Activated CD4-positive, alpha-beta T cell treated with anti-CD3 and anti-CD28 coated beads, Interleukin-2, amount 10 ng/mL, durations not matched to agents 24 days and 14 days (primary cell): ENCODE measurements at regions of chr15 and their contacts with region 1.

Region 1: DNA sequence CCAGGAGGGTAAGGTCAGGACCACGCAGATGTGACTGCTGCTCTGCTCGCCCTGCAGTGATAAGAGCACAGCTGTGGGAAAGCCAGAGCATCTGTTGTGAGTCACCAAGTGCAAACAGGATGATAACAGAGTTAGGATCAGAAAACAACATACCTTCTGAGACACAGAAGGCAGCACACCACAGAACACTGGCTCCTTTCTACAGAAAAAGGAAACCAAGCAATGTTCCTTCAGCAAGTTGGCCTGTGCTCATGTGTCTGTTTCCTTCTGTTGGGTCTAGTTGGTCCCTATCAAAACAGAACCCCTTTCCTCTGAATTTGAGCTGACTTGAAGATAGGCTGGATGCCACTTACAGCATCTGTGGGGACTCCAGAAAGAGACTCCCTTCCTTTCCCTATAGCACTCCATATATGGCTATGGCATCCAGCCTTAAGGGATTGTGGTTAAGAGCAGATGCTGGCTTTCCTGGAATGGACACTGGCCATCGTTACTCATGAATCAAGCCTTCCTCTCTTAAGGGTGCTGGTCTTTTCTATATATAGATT is 440.7 kb upstream of the THBS1 start:
- DNase-seq: peak; percentile 75
- H3K4me3 Mint-ChIP-seq: no peak overlapping the region
- H3K27ac Mint-ChIP-seq: peak overlapping the region; percentile 84
- H3K4me1 Mint-ChIP-seq: peaks cover 44% of the 10 kb centered on the region
- H3K27me3 Mint-ChIP-seq: no peaks in the 10 kb centered on the region

Region 2: DNA sequence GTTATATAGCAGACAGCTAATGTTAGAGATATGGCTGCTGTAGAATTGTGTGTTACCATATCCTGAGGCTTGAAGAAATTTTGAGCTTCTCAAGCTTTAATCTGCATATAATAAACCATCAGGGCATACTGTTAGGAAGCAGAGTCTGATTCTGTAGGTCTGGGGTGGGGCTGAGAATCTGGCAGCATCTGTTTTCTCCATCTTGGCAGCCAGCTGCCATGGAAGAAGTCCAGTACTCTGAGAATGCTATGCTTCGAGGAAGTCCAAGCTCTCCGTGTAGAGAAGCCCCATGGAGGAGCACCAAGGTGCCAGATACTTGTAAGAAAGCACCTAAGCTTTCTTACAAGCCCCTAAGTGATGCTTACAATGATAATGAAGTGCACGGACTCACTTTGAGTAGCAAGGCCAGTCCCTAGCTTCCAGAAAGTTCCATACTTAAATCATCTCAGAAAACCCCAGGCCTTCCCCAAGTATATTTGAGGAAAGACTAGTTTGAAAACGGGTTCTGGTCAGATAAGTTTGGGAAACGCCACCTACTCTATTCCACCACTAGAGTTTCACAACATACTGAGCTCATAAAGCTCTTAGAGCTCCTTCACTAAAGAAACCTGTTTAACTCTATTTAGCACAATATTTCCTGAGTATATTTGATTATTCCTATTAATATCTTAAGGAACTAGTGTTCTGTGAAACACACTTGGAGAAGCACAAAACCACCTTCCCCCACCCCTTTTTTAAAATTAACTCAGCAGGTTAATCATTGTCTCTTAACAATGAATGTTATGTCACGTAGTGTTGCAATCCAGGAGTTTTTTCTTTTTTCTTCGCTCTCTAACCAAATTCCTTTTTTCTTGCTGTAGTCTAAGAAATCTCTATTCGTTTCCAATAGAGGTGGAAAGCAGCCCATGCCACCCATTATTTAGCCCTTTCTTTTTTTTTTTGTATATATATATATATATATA is 515.6 kb before region 1 on chr15:
- intact Hi-C with region 1: no loop called
- DNase-seq: no peak
- H3K4me3 Mint-ChIP-seq: no peak overlapping the region
- H3K27ac Mint-ChIP-seq: no peak overlapping the region
- H3K4me1 Mint-ChIP-seq: peaks cover 45% of the 10 kb centered on the region
- H3K27me3 Mint-ChIP-seq: peaks cover 2% of the 10 kb centered on the region

Region 3: DNA sequence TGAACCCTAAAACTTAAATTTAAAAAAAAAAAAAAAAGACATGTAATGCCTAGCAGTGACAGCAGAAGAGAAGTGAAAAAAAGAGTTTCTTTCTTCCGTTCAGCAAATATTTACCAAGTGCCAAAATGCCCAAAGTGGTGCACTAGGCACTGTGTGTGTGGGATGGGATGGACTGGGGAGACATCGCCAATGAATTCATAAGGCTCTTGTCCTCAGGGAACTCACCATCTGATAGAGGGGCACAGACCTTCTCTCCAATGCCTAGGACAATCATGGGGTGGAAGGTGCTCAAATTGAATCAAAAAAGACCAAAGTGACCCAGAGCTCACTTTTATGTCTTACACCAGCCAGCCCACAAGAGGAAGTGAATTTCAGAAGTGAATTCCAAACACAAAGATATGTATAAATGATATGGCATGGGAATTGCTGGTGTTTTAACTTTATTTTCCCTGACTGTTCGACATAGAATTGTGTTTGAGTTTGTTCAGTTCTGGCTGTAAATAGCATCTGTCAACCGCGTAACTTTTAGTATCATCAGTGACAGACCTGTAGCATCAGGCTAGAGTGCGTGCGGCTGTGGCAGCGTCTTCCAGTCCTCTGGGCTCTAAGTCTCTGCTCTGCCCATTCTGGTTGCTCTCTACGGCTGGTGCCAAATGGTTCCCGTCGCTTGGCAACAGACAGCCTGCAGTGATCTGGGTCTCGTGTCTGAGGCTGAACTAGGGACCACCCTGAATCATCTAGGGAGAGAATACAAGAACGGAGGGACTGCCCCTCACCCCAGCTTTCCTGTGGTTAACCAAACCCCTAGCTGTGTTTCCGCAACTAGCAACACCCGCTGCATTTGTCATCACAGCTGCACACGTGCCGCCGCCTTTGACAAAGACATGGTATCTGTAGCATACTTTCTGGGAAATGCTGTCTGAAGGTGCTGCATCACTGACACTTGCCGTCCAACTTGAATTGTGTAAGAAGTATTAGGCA is 286.7 kb after region 1 on chr15:
- intact Hi-C with region 1: loop called (anchors 5 kb)
- DNase-seq: peak; percentile 90
- H3K4me3 Mint-ChIP-seq: peak overlapping the region; percentile 69
- H3K27ac Mint-ChIP-seq: peak overlapping the region; percentile 75
- H3K4me1 Mint-ChIP-seq: peaks cover 19% of the 10 kb centered on the region
- H3K27me3 Mint-ChIP-seq: peaks cover 44% of the 10 kb centered on the region